ENCODE measurements at regions of chr3 and their contacts with region 1.

Region 1: DNA sequence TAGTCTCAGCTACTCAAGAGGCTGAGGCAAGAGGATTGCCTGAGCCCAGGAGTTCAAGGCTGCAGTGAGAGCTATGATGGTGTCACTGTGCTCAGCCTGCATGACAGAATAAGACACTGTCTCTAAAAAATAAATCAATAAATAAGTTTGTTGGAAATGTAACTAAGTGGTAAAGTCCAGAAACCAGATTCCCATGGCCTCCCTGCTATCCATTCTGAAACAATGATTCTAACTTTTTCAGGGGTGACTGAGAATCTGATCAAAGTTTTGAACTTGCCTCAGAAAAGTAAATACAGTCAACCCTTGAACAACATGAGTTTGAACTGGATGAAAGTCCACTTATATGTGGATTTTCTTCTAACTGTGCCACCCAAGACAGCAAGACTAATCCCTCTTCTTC is 86.2 kb downstream of the NBEAL2 start:
- DNase-seq: no peak
- H3K4me3 ChIP-seq: no peak overlapping the region
- H3K27ac ChIP-seq: no peak overlapping the region
- H3K4me1 ChIP-seq: no peaks in the 10 kb centered on the region
- H3K27me3 ChIP-seq: no peaks in the 10 kb centered on the region
- CTCF ChIP-seq: no peak

Region 2: GRCh38 chr3:46970391-46971091 is 95.1 kb before region 1 on chr3:
- CTCF ChIA-PET with region 1: no interaction called
- dilution Hi-C with region 1: loop called (anchors 5 kb)
- in situ Hi-C with region 1: no loop called
- intact Hi-C with region 1: no loop called
- DNase-seq: no peak
- H3K4me3 ChIP-seq: no peak overlapping the region
- H3K27ac ChIP-seq: no peak overlapping the region
- H3K4me1 ChIP-seq: peaks cover 22% of the 10 kb centered on the region
- H3K27me3 ChIP-seq: no peaks in the 10 kb centered on the region
- CTCF ChIP-seq: no peak

Region 3: GRCh38 chr3:47022641-47023071 is 43.0 kb before region 1 on chr3:
- CTCF ChIA-PET with region 1: no interaction called
- dilution Hi-C with region 1: loop called (anchors 5 kb)
- in situ Hi-C with region 1: no loop called
- intact Hi-C with region 1: no loop called
- DNase-seq: no peak
- H3K4me3 ChIP-seq: no peak overlapping the region
- H3K27ac ChIP-seq: no peak overlapping the region
- H3K4me1 ChIP-seq: peaks cover 18% of the 10 kb centered on the region
- H3K27me3 ChIP-seq: no peaks in the 10 kb centered on the region
- CTCF ChIP-seq: no peak

Region 4: GRCh38 chr3:47113669-47114365 is 48.1 kb after region 1 on chr3:
- CTCF ChIA-PET with region 1: no interaction called
- dilution Hi-C with region 1: loop called (anchors 5 kb)
- in situ Hi-C with region 1: no loop called
- intact Hi-C with region 1: no loop called
- DNase-seq: peak; percentile 79
- H3K4me3 ChIP-seq: no peak overlapping the region
- H3K27ac ChIP-seq: peak overlapping the region; percentile 87
- H3K4me1 ChIP-seq: peaks cover 23% of the 10 kb centered on the region
- H3K27me3 ChIP-seq: no peaks in the 10 kb centered on the region
- CTCF ChIP-seq: no peak